ENCODE measurements at regions of chr1 and their contacts with region 1.

Region 1: DNA sequence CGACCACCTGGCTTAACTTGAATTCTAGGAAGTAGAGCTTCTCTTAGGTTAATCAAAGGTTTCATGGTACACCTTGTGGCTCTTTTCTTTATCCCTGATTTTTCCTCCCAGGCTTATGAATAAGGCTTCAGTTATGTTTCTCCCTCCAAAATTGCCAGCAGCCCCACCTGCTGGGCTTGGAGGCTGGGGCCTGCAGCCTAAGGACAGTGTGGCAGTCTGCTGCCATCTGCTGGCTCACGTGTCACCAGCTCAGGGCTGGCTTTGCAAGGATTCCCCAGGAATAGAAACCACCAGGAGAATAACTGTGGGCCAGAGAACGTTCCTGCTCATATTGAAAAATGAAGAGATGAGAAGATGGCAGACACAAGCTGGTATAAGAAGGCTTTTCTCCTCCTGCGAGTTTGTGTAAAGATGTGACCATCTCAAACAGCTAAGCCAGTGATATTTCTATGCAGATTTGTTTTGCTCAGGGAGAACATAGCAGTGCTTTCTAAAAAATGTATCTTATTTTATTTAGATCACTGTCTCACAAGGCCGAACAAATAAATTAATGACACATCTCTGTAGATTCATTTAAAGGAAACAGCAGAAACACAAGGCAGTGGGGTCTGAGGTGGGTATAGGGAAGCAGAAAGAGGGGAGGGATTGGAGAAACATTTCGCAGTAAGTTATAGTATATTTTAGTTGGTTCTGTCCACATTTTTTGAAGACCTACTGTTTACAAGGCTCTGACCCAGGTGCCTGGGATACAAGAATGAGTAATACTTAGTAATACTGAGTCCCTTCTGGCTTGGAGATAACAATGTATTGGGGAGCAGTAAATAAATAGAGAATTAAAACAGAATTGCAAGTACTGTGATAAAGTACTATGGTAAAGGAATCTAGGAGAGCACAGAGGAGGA is 291.1 kb upstream of the SGIP1 start:
- DNase-seq: peak; percentile 44 to 85 (median 73)
- ATAC-seq: peak; percentile 82
- H3K4me3 ChIP-seq: no peak overlapping the region
- H3K4me3 Mint-ChIP-seq: no peak overlapping the region
- H3K27ac ChIP-seq: no peak overlapping the region
- H3K27ac Mint-ChIP-seq: no peak overlapping the region
- H3K4me1 ChIP-seq: peaks cover 12% of the 10 kb centered on the region
- H3K4me1 Mint-ChIP-seq: peaks cover 23% of the 10 kb centered on the region
- H3K27me3 ChIP-seq: no peaks in the 10 kb centered on the region
- H3K27me3 Mint-ChIP-seq: peaks cover 6% of the 10 kb centered on the region
- CTCF ChIP-seq: peak; percentile 97

Region 2: DNA sequence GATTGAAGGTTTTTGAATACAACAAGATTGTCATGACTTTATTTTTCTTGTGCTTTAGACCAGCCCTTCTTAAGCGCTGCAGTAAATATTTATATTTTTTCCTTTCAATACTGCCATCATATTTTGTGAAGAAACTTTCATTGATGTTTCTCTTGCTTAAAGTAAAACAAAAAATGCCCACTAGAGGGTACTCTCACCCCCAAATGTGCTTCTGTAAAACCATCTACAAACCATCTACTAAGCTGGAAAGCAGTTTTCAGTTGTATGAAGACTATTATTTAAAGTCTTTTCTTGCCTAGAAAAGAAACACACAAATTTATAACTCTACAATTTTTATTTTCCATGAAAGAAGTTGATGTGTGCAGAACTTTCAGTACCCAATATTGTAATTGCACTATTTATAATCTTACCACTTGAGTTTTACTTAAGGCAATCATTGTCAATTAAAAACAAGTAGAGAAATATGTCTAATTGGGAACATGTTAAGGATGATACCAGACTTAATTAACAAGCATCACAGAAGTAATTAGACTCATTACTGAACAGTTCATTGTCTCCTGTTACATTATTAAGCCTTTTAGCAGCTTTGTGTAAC is 811.7 kb before region 1 on chr1:
- CTCF ChIA-PET with region 1: no interaction called
- POLR2A ChIA-PET with region 1: no interaction called
- intact Hi-C with region 1: loop called in 1 of 2 experiments (anchors 2 kb)
- DNase-seq: peak in 2 of 9 experiments; percentile 38 to 45
- ATAC-seq: peak; percentile 55
- H3K4me3 ChIP-seq: no peak overlapping the region
- H3K4me3 Mint-ChIP-seq: no peak overlapping the region
- H3K27ac ChIP-seq: no peak overlapping the region
- H3K27ac Mint-ChIP-seq: no peak overlapping the region
- H3K4me1 ChIP-seq: no peaks in the 10 kb centered on the region
- H3K4me1 Mint-ChIP-seq: no peaks in the 10 kb centered on the region
- H3K27me3 ChIP-seq: no peaks in the 10 kb centered on the region
- H3K27me3 Mint-ChIP-seq: no peaks in the 10 kb centered on the region
- CTCF ChIP-seq: peak; percentile 70

Region 3: GRCh38 chr1:66182551-66183178 is 60.2 kb before region 1 on chr1:
- CTCF ChIA-PET with region 1: interaction called, 18 read pairs
- POLR2A ChIA-PET with region 1: no interaction called
- intact Hi-C with region 1: no loop called
- DNase-seq: peak in 6 of 9 experiments; percentile 1 to 63 (median 34)
- ATAC-seq: peak; percentile 92
- H3K4me3 ChIP-seq: no peak overlapping the region
- H3K4me3 Mint-ChIP-seq: no peak overlapping the region
- H3K27ac ChIP-seq: no peak overlapping the region
- H3K27ac Mint-ChIP-seq: no peak overlapping the region
- H3K4me1 ChIP-seq: peaks cover 3% of the 10 kb centered on the region
- H3K4me1 Mint-ChIP-seq: peaks cover 22% of the 10 kb centered on the region
- H3K27me3 ChIP-seq: no peaks in the 10 kb centered on the region
- H3K27me3 Mint-ChIP-seq: no peaks in the 10 kb centered on the region
- CTCF ChIP-seq: no peak

Region 4: GRCh38 chr1:66231217-66231616 is 11.7 kb before region 1 on chr1:
- CTCF ChIA-PET with region 1: interaction called, 23 read pairs
- POLR2A ChIA-PET with region 1: interaction called, 3 read pairs
- intact Hi-C with region 1: no loop called
- DNase-seq: no peak
- ATAC-seq: no peak
- H3K4me3 ChIP-seq: no peak overlapping the region
- H3K4me3 Mint-ChIP-seq: no peak overlapping the region
- H3K27ac ChIP-seq: no peak overlapping the region
- H3K27ac Mint-ChIP-seq: no peak overlapping the region
- H3K4me1 ChIP-seq: no peaks in the 10 kb centered on the region
- H3K4me1 Mint-ChIP-seq: no peaks in the 10 kb centered on the region
- H3K27me3 ChIP-seq: no peaks in the 10 kb centered on the region
- H3K27me3 Mint-ChIP-seq: peaks cover 8% of the 10 kb centered on the region
- CTCF ChIP-seq: no peak

Region 5: DNA sequence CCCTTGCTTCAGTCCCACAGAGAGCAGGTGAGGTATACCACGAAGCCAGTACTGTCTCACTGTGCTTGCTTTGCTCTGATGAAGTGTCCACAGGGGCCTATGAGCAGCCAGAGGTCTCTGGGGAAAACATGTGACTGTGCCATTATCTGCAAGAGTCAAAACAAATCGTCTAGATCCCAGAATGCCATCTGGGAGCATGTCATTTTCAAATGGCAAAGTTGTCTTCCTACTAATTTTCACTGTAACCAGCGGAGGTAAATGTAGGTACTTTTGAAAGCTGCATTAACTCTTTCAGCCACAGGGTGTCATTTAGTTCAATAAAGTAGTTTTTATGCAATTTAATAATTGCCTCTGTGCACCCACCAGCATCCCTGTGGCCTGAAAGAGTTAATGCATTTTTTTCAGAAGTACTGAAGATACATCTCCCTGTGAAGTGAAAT is 117.4 kb after region 1 on chr1:
- CTCF ChIA-PET with region 1: interaction called, 14 read pairs
- POLR2A ChIA-PET with region 1: no interaction called
- intact Hi-C with region 1: no loop called
- DNase-seq: no peak
- ATAC-seq: no peak
- H3K4me3 ChIP-seq: no peak overlapping the region
- H3K4me3 Mint-ChIP-seq: no peak overlapping the region
- H3K27ac ChIP-seq: no peak overlapping the region
- H3K27ac Mint-ChIP-seq: no peak overlapping the region
- H3K4me1 ChIP-seq: peaks cover 37% of the 10 kb centered on the region
- H3K4me1 Mint-ChIP-seq: peaks cover 63% of the 10 kb centered on the region
- H3K27me3 ChIP-seq: no peaks in the 10 kb centered on the region
- H3K27me3 Mint-ChIP-seq: no peaks in the 10 kb centered on the region
- CTCF ChIP-seq: peak; percentile 21

Region 6: GRCh38 chr1:66446261-66447001 is 203.5 kb after region 1 on chr1:
- CTCF ChIA-PET with region 1: interaction called, 677 read pairs
- POLR2A ChIA-PET with region 1: interaction called, 5 read pairs
- intact Hi-C with region 1: loop called (anchors 2 kb)
- DNase-seq: peak in 6 of 9 experiments; percentile 14 to 86 (median 31)
- ATAC-seq: peak; percentile 74
- H3K4me3 ChIP-seq: peak overlapping the region in 1 of 2 experiments; percentile 12
- H3K4me3 Mint-ChIP-seq: peak overlapping the region; percentile 66
- H3K27ac ChIP-seq: peak overlapping the region; percentile 47 to 73
- H3K27ac Mint-ChIP-seq: peak overlapping the region; percentile 95
- H3K4me1 ChIP-seq: peaks cover 20% of the 10 kb centered on the region
- H3K4me1 Mint-ChIP-seq: peaks cover 23% of the 10 kb centered on the region
- H3K27me3 ChIP-seq: no peaks in the 10 kb centered on the region
- H3K27me3 Mint-ChIP-seq: no peaks in the 10 kb centered on the region
- CTCF ChIP-seq: peak; percentile 90

Measured in CD8-positive, alpha-beta T cell (primary cell).